ENCODE measurements at regions of chr10 and their contacts with region 1.

Region 1: DNA sequence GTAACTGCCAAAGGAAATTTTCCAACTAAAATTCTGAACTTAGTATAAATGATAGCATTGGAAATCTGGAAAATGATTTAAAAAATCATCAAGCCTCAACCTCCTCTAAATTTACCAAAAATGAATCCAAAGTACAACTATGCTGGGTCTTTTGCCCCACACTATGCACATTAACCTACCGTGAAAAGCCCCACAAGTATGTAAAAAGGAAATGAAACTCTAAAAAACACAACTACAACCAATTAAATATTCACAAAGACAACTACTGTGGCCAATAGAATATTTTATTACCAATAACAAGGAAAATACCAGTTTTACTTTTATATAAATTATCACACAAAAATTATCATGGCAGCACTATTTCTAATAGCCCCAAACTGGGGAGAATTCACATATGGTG is 19.3 kb downstream of the EIF3A start:
- DNase-seq: no peak
- H3K4me3 Mint-ChIP-seq: no peak overlapping the region
- H3K27ac Mint-ChIP-seq: no peak overlapping the region
- H3K4me1 Mint-ChIP-seq: no peaks in the 10 kb centered on the region
- H3K27me3 Mint-ChIP-seq: no peaks in the 10 kb centered on the region
- CTCF ChIP-seq: no peak

Region 2: GRCh38 chr10:117792214-117792613 is 1269.1 kb before region 1 on chr10:
- CTCF ChIA-PET with region 1: interaction called, 11 read pairs
- intact Hi-C with region 1: no loop called
- DNase-seq: no peak
- H3K4me3 Mint-ChIP-seq: no peak overlapping the region
- H3K27ac Mint-ChIP-seq: no peak overlapping the region
- H3K4me1 Mint-ChIP-seq: no peaks in the 10 kb centered on the region
- H3K27me3 Mint-ChIP-seq: peaks cover 15% of the 10 kb centered on the region
- CTCF ChIP-seq: no peak

Region 3: DNA sequence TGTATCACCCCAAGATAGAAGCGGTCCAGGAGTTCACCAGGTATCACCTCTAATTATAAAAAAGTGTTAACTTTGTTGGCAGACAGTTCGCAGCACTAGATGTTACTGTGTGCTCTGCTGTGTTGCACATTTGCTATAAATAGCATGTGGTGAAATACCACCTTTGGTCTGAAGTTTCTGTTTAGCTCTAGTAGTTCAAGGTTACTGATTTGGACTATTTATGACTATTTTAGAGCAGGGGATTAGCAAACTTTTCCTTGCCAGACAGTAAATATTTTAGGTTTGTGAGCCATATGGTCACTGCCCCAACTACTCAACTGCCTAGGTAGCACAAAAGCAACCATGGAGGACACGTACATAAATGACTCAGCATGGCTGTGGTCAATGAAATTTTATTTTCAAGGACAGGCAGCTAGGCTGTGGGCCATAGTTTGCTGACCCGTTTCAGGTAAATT is 59.1 kb after region 1 on chr10:
- CTCF ChIA-PET with region 1: no interaction called
- intact Hi-C with region 1: no loop called
- DNase-seq: no peak
- H3K4me3 Mint-ChIP-seq: no peak overlapping the region
- H3K27ac Mint-ChIP-seq: no peak overlapping the region
- H3K4me1 Mint-ChIP-seq: no peaks in the 10 kb centered on the region
- H3K27me3 Mint-ChIP-seq: no peaks in the 10 kb centered on the region
- CTCF ChIP-seq: no peak

Measured in Calu3 (cell line).